ENCODE measurements at regions of chr6 and their contacts with region 1.

Region 1: GRCh38 chr6:156776840-156777576 is at the start of gene ARID1B:
- DNase-seq: peak; percentile 86 to 94 (median 94)
- ATAC-seq: peak; percentile 81 to 82
- H3K4me3 ChIP-seq: peak within 1 kb of the TSS; percentile 100
- H3K27ac ChIP-seq: peak within 1 kb of the TSS; percentile 99
- H3K4me1 ChIP-seq: no peaks in the 10 kb centered on the region
- H3K27me3 ChIP-seq: no peaks in the 10 kb centered on the region
- total RNA-seq, gene ARID1B: 52.3 to 59.6 (median 54.2) TPM

Region 2: GRCh38 chr6:156564127-156564806 is 212.7 kb before region 1 on chr6:
- intact Hi-C with region 1: loop called in 2 of 4 experiments (anchors 5 to 10 kb)
- DNase-seq: peak; percentile 79 to 92 (median 91)
- ATAC-seq: peak; percentile 95 to 96
- H3K4me3 ChIP-seq: no peak overlapping the region
- H3K27ac ChIP-seq: no peak overlapping the region
- H3K4me1 ChIP-seq: no peaks in the 10 kb centered on the region
- H3K27me3 ChIP-seq: no peaks in the 10 kb centered on the region

Region 3: GRCh38 chr6:156686995-156687788 is 89.8 kb before region 1 on chr6:
- intact Hi-C with region 1: loop called (anchors 2 to 5 kb)
- DNase-seq: peak; percentile 91 to 97 (median 96)
- ATAC-seq: peak; percentile 96 to 97
- H3K4me3 ChIP-seq: peak overlapping the region; percentile 61
- H3K27ac ChIP-seq: peak overlapping the region; percentile 96
- H3K4me1 ChIP-seq: no peaks in the 10 kb centered on the region
- H3K27me3 ChIP-seq: no peaks in the 10 kb centered on the region

Region 4: DNA sequence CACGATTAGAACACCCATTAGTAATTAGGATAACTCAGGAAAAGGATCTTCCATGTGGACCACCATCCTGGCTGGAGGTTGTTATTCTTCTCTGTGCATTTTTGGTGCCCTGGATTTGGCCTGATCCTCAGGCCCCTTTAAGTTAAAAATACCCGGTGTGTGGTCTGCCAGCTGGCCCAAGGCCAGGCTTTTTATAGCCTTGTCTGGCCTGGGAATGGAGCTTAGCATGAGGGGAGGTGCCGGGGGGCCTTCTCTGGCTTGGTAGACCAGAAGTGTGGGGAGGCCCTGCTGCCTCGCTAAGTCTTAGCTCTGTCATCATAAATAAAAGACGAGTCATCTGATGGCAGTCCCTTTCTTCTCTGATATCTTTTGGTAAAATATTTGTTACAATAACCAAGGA is 71.5 kb after region 1 on chr6:
- intact Hi-C with region 1: loop called in 1 of 4 experiments (anchors 10 kb)
- DNase-seq: peak; percentile 65 to 90 (median 87)
- ATAC-seq: peak; percentile 79 to 81
- H3K4me3 ChIP-seq: peak overlapping the region; percentile 23
- H3K27ac ChIP-seq: peak overlapping the region; percentile 3
- H3K4me1 ChIP-seq: peaks cover 22% of the 10 kb centered on the region
- H3K27me3 ChIP-seq: no peaks in the 10 kb centered on the region

Region 5: GRCh38 chr6:156876302-156876701 is 99.3 kb after region 1 on chr6:
- intact Hi-C with region 1: loop called in 1 of 4 experiments (anchors 10 kb)
- DNase-seq: peak; percentile 41 to 73 (median 69)
- ATAC-seq: peak; percentile 25 to 58
- H3K4me3 ChIP-seq: no peak overlapping the region
- H3K27ac ChIP-seq: no peak overlapping the region
- H3K4me1 ChIP-seq: peaks cover 28% of the 10 kb centered on the region
- H3K27me3 ChIP-seq: no peaks in the 10 kb centered on the region

Region 6: GRCh38 chr6:156953479-156954146 is 176.6 kb after region 1 on chr6:
- intact Hi-C with region 1: loop called in 1 of 4 experiments (anchors 10 kb)
- DNase-seq: no peak
- ATAC-seq: peak; percentile 63 to 74
- H3K4me3 ChIP-seq: no peak overlapping the region
- H3K27ac ChIP-seq: no peak overlapping the region
- H3K4me1 ChIP-seq: peaks cover 17% of the 10 kb centered on the region
- H3K27me3 ChIP-seq: no peaks in the 10 kb centered on the region

Region 7: GRCh38 chr6:157021344-157021992 is 244.5 kb after region 1 on chr6:
- intact Hi-C with region 1: loop called in 3 of 4 experiments (anchors 2 to 10 kb)
- DNase-seq: peak; percentile 94 to 97 (median 96)
- ATAC-seq: peak; percentile 97
- H3K4me3 ChIP-seq: peak overlapping the region; percentile 80
- H3K27ac ChIP-seq: peak overlapping the region; percentile 99
- H3K4me1 ChIP-seq: peaks cover 3% of the 10 kb centered on the region
- H3K27me3 ChIP-seq: no peaks in the 10 kb centered on the region